Endothelial cell of umbilical vein (primary cell): ENCODE measurements at regions of chr6 and their contacts with region 1.

Region 1: GRCh38 chr6:5471044-5471443 is 209.7 kb downstream of the FARS2 start:
- DNase-seq: peak; percentile 66
- H3K4me3 ChIP-seq: no peak overlapping the region
- H3K27ac ChIP-seq: no peak overlapping the region
- H3K4me1 ChIP-seq: peaks cover 6% of the 10 kb centered on the region
- H3K27me3 ChIP-seq: no peaks in the 10 kb centered on the region
- CTCF ChIP-seq: peak; percentile 87 to 91
- POLR2A ChIP-seq: no peak

Region 2: DNA sequence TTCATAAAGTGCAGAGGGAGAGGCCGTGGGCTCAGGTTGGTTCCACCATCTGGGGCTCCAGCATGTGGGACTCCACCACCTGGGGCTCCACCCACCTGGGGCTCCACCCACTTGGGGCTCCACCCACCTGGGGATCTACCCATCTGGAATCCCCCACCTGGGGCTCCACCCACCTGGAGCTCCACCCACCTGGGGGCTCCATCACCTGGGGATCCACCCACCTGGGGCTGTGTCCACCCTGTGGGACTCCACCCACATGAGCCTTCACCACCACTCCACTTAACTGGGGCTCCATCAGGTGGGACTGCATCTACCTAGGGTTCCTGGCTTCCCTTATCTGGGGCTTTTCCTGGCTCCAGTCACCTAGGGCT is 920.8 kb before region 1 on chr6:
- CTCF ChIA-PET with region 1: no interaction called
- POLR2A ChIA-PET with region 1: no interaction called
- dilution Hi-C with region 1: no loop called
- intact Hi-C with region 1: no loop called
- DNase-seq: no peak
- H3K4me3 ChIP-seq: no peak overlapping the region
- H3K27ac ChIP-seq: no peak overlapping the region
- H3K4me1 ChIP-seq: no peaks in the 10 kb centered on the region
- H3K27me3 ChIP-seq: peaks cover 2 to 4% of the 10 kb centered on the region in 2 experiments
- CTCF ChIP-seq: no peak
- POLR2A ChIP-seq: no peak

Region 3: GRCh38 chr6:5078121-5078669 is 392.8 kb before region 1 on chr6:
- CTCF ChIA-PET with region 1: no interaction called
- POLR2A ChIA-PET with region 1: no interaction called
- dilution Hi-C with region 1: no loop called
- intact Hi-C with region 1: no loop called
- DNase-seq: peak; percentile 24
- H3K4me3 ChIP-seq: no peak overlapping the region
- H3K27ac ChIP-seq: no peak overlapping the region
- H3K4me1 ChIP-seq: no peaks in the 10 kb centered on the region
- H3K27me3 ChIP-seq: peaks cover 0 to 5% of the 10 kb centered on the region in 2 experiments
- CTCF ChIP-seq: peak in 1 of 2 donors; percentile 28
- POLR2A ChIP-seq: no peak

Region 4: GRCh38 chr6:5395719-5396118 is 75.3 kb before region 1 on chr6:
- CTCF ChIA-PET with region 1: no interaction called
- POLR2A ChIA-PET with region 1: no interaction called
- dilution Hi-C with region 1: no loop called
- intact Hi-C with region 1: no loop called
- DNase-seq: no peak
- H3K4me3 ChIP-seq: no peak overlapping the region
- H3K27ac ChIP-seq: no peak overlapping the region
- H3K4me1 ChIP-seq: no peaks in the 10 kb centered on the region
- H3K27me3 ChIP-seq: no peaks in the 10 kb centered on the region
- CTCF ChIP-seq: no peak
- POLR2A ChIP-seq: no peak

Region 5: GRCh38 chr6:5457041-5457440 is 14.0 kb before region 1 on chr6:
- CTCF ChIA-PET with region 1: interaction called, 19 read pairs
- POLR2A ChIA-PET with region 1: no interaction called
- dilution Hi-C with region 1: no loop called
- intact Hi-C with region 1: no loop called
- DNase-seq: peak; percentile 29
- H3K4me3 ChIP-seq: no peak overlapping the region
- H3K27ac ChIP-seq: no peak overlapping the region
- H3K4me1 ChIP-seq: no peaks in the 10 kb centered on the region
- H3K27me3 ChIP-seq: no peaks in the 10 kb centered on the region
- CTCF ChIP-seq: no peak
- POLR2A ChIP-seq: no peak

Region 6: DNA sequence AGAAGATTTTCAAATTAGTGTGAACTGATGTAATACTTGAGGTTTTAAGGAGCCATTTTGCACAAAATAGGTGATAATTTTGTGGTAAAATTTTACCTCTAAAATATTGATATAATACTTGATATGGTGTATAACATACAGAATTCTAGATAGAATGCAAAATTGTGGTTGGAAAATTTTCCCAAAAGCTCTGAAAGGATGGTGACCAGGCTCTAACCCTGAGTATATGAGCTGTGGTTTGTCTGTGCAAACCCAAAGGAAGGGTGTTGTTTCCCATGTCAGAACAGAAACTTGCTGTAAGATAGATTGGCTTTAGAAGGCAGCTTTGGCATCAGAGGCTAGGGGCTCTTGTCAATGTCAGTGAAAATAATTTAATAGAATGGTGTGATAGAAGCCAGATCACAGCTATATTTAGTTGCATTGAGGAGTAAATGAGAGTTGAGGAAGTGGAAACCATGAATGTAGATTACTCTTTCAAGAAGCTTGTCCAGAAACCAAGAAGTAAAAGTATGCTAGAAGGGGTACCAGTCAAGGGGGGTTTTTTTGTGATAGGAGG is 48.0 kb after region 1 on chr6:
- CTCF ChIA-PET with region 1: interaction called, 11 read pairs
- POLR2A ChIA-PET with region 1: no interaction called
- dilution Hi-C with region 1: no loop called
- intact Hi-C with region 1: no loop called
- DNase-seq: no peak
- H3K4me3 ChIP-seq: no peak overlapping the region
- H3K27ac ChIP-seq: no peak overlapping the region
- H3K4me1 ChIP-seq: no peaks in the 10 kb centered on the region
- H3K27me3 ChIP-seq: no peaks in the 10 kb centered on the region
- CTCF ChIP-seq: no peak
- POLR2A ChIP-seq: no peak

Region 7: DNA sequence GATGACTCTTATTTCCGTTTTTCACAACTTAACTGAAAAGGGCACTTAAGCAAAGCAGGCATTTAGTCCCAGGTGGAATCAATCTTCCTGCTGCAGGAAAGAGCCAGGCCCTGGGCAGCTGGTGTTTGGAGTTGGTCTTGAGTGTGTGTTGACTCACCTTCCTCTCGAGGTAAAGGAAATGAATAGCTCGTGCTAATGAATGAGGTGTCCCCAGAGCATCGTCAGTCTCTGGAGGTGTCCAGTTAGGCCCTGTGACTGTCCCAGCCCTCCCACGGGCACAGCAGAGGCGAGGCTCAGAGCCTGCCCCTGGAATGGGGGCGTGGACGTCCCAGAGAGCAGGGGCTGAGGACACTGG is 258.0 kb after region 1 on chr6:
- CTCF ChIA-PET with region 1: interaction called, 16 read pairs
- POLR2A ChIA-PET with region 1: no interaction called
- dilution Hi-C with region 1: no loop called
- intact Hi-C with region 1: no loop called
- DNase-seq: peak; percentile 31
- H3K4me3 ChIP-seq: no peak overlapping the region
- H3K27ac ChIP-seq: peak overlapping the region; percentile 12
- H3K4me1 ChIP-seq: peaks cover 11% of the 10 kb centered on the region
- H3K27me3 ChIP-seq: no peaks in the 10 kb centered on the region
- CTCF ChIP-seq: no peak
- POLR2A ChIP-seq: no peak

Region 8: DNA sequence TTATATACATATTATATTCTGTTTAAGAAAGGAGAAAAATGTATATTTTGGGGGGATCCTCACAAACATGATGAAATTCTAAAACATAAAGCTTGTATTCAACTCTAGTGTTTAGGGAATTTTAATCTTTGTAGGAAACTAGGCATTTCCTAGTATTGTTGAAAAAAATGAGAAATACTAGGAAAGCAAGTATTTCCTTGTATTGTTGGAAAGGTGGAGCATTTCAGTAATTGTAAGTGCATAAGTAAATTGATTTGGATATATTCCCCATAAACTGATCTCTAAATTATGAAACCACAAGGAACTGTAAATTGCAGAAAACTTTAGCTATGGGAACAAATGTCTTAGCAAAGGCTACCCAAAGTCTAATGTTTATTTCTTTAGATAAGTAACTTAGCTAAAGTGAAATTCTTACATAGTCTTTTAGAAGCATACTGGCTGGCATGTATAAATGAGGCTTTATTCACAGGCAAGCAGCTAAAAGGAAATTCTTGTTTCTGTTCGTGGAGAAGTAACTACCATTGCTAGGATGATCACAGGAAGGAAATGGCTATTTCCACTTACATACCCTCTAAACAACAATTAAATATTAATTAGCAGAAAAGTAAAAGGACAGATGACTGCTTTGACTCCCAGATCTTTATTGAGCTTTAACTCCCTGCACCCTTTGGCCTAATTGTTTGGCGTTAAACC is 555.6 kb after region 1 on chr6:
- CTCF ChIA-PET with region 1: interaction called, 10 read pairs
- POLR2A ChIA-PET with region 1: no interaction called
- dilution Hi-C with region 1: no loop called
- intact Hi-C with region 1: no loop called
- DNase-seq: peak; percentile 58
- H3K4me3 ChIP-seq: no peak overlapping the region
- H3K27ac ChIP-seq: peak overlapping the region; percentile 29
- H3K4me1 ChIP-seq: peaks cover 15% of the 10 kb centered on the region
- H3K27me3 ChIP-seq: no peaks in the 10 kb centered on the region
- CTCF ChIP-seq: no peak
- POLR2A ChIP-seq: no peak

Region 9: DNA sequence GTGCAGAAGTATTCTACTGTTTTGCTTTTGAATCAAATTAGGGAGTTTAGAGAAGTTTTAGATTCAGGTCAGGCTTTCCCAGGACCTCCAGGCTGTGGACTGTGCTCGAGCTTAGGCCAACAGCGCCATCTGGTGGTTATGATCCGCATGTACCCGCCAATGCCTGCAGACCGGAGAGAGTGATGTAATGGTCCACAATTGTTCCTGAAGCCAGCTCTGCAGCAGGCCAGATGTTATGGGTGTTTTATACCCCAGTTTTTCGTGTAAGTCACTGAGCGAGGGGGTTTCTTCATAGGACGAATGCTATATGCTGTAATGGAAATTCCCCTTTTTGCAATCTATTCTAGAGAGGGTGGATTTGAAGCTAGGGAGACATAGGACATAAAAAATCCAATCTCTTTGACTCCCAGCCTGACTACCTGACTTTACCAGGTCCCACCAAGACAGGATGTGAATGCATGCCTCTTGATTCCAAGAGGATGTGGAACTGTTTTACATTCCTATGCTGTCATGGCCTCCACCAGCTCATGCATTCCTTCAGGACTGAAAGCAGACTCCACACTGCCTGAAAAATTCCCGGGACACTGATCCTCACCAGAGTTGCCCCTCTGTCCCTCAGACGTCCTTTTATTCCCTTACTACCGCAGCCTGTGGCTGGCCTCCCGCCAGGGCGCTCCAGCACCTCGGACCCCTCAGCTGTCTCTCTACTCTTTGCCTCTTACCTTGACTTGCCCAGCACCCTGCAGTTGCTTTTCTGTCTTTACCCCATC is 1076.3 kb after region 1 on chr6:
- CTCF ChIA-PET with region 1: interaction called, 69 read pairs
- POLR2A ChIA-PET with region 1: no interaction called
- dilution Hi-C with region 1: no loop called
- intact Hi-C with region 1: loop called (anchors 1 kb)
- DNase-seq: peak; percentile 84
- H3K4me3 ChIP-seq: peak overlapping the region in 2 of 3 experiments; percentile 10 to 21
- H3K27ac ChIP-seq: no peak overlapping the region
- H3K4me1 ChIP-seq: no peaks in the 10 kb centered on the region
- H3K27me3 ChIP-seq: peaks cover 11 to 19% of the 10 kb centered on the region in 2 experiments
- CTCF ChIP-seq: peak; percentile 87
- POLR2A ChIP-seq: no peak